GM23248 (cell line): ENCODE measurements at regions of chr17 and their contacts with region 1.

Region 1: GRCh38 chr17:48093341-48094045 is 7.8 kb downstream of the CBX1 start:
- DNase-seq: no peak
- H3K4me3 ChIP-seq: no peak overlapping the region
- H3K27ac ChIP-seq: no peak overlapping the region
- H3K4me1 ChIP-seq: peaks cover 4% of the 10 kb centered on the region; the same call in 1 of the 2 replicates
- H3K27me3 ChIP-seq: no peaks in the 10 kb centered on the region

Region 2: DNA sequence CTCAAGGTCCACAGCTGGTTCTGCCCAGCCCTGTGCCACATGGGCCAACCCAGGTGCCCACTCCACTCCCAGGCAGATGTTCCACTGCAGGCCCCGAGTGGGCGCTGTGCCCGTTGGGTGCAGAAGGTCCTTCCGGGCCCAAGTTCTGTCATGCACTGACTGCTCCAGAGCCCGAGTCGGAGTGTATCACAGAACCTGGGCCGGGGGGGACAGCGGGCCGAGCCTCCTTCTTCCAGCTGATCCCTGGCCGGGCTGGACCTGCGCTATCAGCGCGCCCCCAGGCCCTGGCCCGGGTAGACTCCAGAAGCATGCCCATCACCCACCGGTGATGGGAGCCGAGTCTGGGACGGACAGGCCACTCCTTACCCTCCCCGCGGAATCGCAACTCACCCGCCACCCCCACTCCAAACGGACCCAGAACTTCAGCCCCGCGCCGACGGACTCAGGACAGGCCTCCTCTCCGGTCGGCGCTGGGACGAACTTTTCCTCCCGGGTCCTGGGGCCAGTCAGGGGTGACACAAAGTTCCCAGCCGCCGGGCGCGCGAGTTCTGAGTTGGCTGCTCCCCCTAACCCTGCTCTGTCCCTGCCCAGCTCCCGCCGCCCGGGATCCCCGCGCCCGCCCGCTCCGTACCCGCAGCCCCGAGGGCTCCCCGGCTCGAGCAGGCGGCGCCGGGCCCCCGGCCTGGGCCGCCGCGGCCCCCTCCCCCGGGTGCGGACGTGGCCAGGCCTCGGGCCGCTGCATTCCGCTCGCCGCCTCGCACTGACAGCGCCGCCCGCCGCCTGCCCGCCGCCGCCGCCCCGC is 56.3 kb before region 1 on chr17 and contains the start of gene COPZ2:
- in situ Hi-C with region 1: loop called (anchors 10 kb)
- DNase-seq: peak; percentile 91
- H3K4me3 ChIP-seq: peak within 1 kb of the TSS; percentile 87
- H3K27ac ChIP-seq: peak within 1 kb of the TSS; percentile 76
- H3K4me1 ChIP-seq: peaks cover 16% of the 10 kb centered on the region
- H3K27me3 ChIP-seq: no peaks in the 10 kb centered on the region
- total RNA-seq, gene COPZ2: 148 and 179 TPM in 2 replicates

Region 3: DNA sequence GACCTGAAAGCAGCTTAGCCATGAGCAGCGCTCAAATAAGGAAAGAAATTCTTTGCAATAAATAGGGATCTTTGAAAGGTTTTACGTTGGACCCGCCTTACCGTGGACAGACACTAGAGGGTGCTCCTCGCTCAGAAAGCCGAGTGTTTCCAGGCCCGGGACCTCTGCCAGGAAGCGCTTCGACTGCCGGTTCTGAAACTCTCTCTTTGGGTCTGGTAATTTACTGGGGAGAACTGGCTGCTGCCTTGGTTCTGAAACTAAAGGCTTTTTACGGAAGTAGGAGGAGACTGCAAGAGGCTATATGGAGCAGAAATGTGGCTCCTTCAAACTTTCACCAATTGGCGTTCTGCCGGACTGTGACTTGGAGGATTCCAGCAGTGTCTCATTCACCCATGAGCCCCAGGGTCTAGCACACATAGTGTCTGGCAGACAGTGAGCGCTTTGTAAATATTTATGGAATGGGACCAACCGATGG is 578.2 kb after region 1 on chr17:
- in situ Hi-C with region 1: no loop called
- DNase-seq: peak; percentile 87
- H3K4me3 ChIP-seq: peak overlapping the region; percentile 75
- H3K27ac ChIP-seq: no peak overlapping the region
- H3K4me1 ChIP-seq: no peaks in the 10 kb centered on the region
- H3K27me3 ChIP-seq: peaks cover 47% of the 10 kb centered on the region